GM10248 (cell line): ENCODE measurements at regions of chr17 and their contacts with region 1.

Region 1: DNA sequence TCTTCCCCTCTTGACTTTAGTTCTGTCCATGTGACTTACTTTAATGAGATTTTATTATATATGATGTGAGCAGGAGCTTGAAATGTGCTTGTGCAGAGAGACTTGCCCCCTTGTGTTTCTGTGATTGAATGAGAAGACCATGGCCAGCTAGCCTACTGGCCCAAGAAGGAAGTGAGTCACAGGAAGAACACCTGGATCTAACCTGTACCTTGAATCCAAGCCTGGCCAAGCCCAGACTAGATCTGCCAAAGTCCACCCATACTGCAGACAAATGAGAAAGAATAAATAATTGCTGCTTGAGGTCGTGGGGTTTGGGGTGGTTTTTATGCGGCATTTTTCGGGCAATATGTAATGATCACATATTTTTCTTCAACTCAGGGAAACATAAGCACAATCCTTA is 9.6 kb downstream of the ABCA10 start:
- DNase-seq: no peak
- CTCF ChIP-seq: no peak

Region 2: GRCh38 chr17:69144331-69145255 is 74.4 kb before region 1 on chr17:
- CTCF ChIA-PET with region 1: no interaction called
- POLR2A ChIA-PET with region 1: no interaction called
- DNase-seq: no peak
- CTCF ChIP-seq: no peak

Region 3: DNA sequence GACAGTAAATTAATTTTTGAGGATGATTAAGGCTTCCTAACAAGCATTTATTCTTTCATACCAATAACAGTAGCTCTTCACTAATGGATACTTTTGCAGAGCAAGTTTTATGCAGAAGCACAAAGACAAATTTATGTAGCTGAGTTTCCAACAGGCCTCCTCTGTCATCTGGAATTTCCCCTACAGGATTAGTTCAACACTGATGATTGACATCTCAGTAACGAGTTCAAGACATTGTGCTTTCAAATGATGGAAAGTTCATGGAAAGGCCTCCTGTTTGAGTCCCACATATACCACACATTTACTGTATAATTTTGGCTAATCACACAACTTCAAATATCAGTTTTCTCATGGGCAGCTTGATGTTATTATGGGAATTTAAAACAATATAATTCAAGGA is 30.9 kb before region 1 on chr17:
- CTCF ChIA-PET with region 1: no interaction called
- POLR2A ChIA-PET with region 1: no interaction called
- DNase-seq: no peak
- CTCF ChIP-seq: no peak

Region 4: DNA sequence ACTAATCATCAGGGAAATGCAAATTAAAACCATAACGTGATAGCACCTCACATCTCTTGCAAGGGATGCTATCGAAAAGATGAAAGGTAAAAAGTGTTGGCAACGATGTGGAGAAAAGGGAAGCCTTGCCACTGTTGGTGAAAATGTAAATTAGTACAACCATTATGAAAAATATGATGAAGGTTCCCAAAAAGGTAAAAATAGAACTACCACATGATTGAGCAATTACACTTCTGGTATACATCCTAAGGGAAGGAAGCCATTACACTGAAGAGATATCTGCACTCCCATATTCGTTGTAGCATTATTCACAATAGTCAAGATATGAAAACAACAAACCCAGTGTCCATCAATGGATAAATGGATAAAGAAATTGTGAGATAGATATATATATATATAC is 11.8 kb before region 1 on chr17:
- CTCF ChIA-PET with region 1: interaction called, 20 read pairs
- POLR2A ChIA-PET with region 1: no interaction called
- DNase-seq: no peak
- CTCF ChIP-seq: no peak